ENCODE measurements at regions of chr4 and their contacts with region 1.

Region 1: DNA sequence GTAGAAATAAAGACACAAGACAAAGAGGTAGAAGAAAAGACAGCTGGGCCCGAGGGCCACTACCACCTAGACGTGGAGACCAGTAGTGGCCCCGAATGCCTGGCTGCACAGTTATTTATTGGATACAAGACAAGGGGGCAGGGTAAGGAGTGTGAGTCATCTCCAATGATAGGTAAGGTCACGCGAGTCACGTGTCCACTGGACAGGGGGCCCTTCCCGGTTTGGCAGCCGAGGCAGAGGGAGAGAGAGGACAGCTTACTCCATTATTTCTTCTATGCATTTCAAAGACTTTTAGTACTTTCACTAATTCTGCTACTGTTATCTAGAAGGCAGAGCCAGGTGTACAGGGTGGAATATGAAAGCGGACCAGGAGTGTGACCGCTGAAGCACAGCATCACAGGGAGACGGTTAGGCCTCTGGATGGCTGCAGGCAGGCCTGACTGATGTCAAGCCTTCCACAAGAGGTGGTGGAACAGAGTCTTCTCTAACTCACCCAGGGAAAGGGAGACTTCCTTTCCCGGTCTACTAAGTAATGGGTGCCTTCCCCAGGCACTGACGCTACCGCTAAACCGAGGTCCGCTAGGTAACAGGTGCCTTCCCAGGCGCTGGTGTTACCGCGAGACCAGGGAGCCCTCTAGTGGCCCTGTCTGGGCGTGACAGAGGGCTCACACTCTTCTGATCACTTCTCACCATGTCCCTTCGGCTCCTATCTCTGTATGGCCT is 44.9 kb downstream of the ZBTB49 start:
- DNase-seq: peak; percentile 36
- H3K4me3 ChIP-seq: no peak overlapping the region
- H3K27ac ChIP-seq: no peak overlapping the region
- H3K4me1 ChIP-seq: no peaks in the 10 kb centered on the region
- H3K27me3 ChIP-seq: no peaks in the 10 kb centered on the region
- CTCF ChIP-seq: peak in 3 of 4 experiments; percentile 37 to 66 (median 53)
- POLR2A ChIP-seq: no peak

Region 2: DNA sequence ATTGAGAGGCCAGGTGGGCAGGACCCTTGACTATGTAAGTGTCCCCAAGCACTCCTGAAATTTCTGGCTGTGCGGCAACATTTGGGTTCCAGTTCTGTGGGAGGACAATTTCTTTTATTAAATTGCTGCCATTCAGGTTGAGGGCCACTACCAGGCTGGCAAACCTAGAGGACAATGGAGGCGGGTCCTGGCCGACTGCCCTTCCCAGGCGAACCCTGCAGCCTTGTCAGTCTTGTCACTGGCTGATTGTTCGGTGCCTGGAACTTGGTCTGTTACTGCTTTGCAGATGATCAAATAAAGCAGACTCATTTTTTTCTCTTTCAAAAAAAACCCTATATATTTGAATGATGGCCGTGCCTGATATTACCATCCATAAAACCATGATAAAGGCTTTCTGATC is 80.3 kb before region 1 on chr4:
- intact Hi-C with region 1: loop called (anchors 5 kb)
- DNase-seq: no peak
- H3K4me3 ChIP-seq: no peak overlapping the region
- H3K27ac ChIP-seq: no peak overlapping the region
- H3K4me1 ChIP-seq: no peaks in the 10 kb centered on the region
- H3K27me3 ChIP-seq: no peaks in the 10 kb centered on the region
- CTCF ChIP-seq: no peak
- POLR2A ChIP-seq: no peak

Region 3: GRCh38 chr4:4470208-4470607 is 135.2 kb after region 1 on chr4:
- intact Hi-C with region 1: no loop called
- DNase-seq: no peak
- H3K4me3 ChIP-seq: no peak overlapping the region
- H3K27ac ChIP-seq: no peak overlapping the region
- H3K4me1 ChIP-seq: no peaks in the 10 kb centered on the region
- H3K27me3 ChIP-seq: no peaks in the 10 kb centered on the region
- CTCF ChIP-seq: no peak
- POLR2A ChIP-seq: no peak

Measured in prostate gland (tissue), 2 donors.